GM18951 (cell line): ENCODE measurements at regions of chr6 and their contacts with region 1.

Region 1: GRCh38 chr6:105097288-105097687 is 82.5 kb downstream of the POPDC3 start:
- POLR2A ChIP-seq: no peak

Region 2: GRCh38 chr6:103559586-103559985 is 1537.7 kb before region 1 on chr6:
- in situ Hi-C with region 1: no loop called
- POLR2A ChIP-seq: no peak

Region 3: GRCh38 chr6:105045526-105045925 is 51.8 kb before region 1 on chr6:
- in situ Hi-C with region 1: no loop called
- POLR2A ChIP-seq: no peak

Region 4: DNA sequence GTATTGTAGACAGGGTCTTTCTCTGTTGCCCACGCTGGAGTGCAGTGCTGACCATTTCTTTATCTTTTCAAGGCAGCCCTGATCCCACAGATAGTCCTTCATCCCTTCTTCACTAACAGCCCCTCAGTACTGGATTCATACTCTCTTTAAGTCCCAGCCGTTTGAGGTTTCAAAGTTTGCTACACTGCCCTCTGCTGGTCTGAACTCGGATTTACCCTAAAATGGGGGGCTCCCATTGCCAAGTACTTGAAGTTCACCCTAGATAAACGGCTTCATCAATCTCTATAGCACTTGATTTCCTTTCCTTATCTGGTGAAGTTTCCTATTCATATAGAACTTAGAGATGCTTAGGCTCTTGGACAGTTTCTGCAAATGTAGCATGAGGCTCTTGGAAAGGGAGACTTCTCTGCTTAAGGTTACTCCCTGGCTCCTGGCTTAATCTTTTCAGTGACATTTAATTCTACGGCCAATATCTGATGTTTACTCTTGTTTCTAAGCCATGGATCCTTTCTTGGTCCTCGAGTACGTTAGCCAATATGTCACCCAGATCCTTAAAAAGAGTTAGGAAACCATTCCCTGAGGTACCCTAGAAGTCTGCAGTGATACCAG is 327.0 kb after region 1 on chr6:
- in situ Hi-C with region 1: loop called (anchors 10 kb)
- POLR2A ChIP-seq: no peak